HepG2 (cell line): ENCODE measurements at regions of chr9 and their contacts with region 1.

Region 1: DNA sequence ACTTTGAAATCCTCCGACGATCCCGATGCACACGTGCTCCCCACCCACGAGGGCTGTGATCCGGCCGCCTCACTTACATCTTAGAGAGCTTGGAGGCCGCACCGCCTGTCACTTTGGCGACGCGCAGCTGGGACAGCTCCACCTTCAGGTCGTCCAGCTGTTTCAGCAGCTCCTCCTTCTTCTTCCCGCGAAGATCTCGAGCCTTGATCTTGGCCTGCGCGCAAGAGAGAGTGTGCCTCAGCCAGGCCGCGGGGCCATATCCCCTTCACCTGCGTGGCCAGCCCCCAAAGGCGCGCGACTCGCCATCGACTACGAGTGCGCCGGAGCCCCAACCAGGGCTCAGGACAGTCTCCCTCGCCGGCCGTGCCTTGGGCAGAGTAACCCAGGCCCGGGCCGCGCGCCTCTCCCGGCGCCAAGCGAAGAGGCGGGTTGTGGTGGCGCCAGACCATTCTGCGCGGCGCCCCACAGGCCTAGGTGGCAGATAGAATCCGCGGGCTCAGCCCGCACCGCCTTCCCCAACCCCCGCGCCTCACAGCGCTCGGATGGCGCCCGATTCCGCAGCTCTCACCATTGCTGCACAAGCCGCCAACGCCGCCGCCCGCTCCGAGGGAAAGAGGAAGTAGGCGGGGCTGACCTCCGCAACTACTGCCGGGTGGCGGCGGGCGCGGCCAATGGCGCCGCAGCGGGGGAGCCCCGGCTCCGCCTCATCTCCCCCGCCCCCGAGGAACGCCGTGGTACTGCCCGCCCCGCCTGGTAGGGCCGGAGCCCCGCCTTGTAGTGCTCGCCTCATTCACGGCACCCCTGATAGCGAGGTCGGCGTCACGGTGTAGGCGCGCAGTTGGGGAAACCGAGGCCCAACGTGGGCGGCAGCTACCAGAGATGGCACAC is at the starts of genes ARPC5L and RPL35:
- DNase-seq: peak; percentile 78
- ATAC-seq: peak; percentile 90
- H3K4me3 ChIP-seq: peak within 1 kb of the TSS; percentile 89 to 97 (median 91)
- H3K27ac ChIP-seq: peak within 1 kb of the TSS; percentile 95
- H3K4me1 ChIP-seq: peaks cover 44% of the 10 kb centered on the region
- H3K27me3 ChIP-seq: no peaks in the 10 kb centered on the region; a peak in 1 of 5 replicates
- CTCF ChIP-seq: peak; percentile 40
- EP300 ChIP-seq: peak in 1 of 2 experiments; percentile 19; a peak in 1 of 4 replicates
- POLR2A ChIP-seq: peak in 1 of 2 experiments; percentile 85; a peak in 2 of 4 replicates
- RAD21 ChIP-seq: no peak
- total RNA-seq, gene ARPC5L: 33.8 and 35.4 TPM in 2 replicates
- total RNA-seq, gene RPL35: 2,153 and 2,627 TPM in 2 replicates

Region 2: GRCh38 chr9:124908570-124908969 is 47.0 kb after region 1 on chr9:
- CTCF ChIA-PET with region 1: no interaction called
- POLR2A ChIA-PET with region 1: no interaction called
- in situ Hi-C with region 1: no loop called
- intact Hi-C with region 1: no loop called
- DNase-seq: no peak
- ATAC-seq: no peak
- H3K4me3 ChIP-seq: no peak overlapping the region
- H3K27ac ChIP-seq: no peak overlapping the region
- H3K4me1 ChIP-seq: no peaks in the 10 kb centered on the region
- H3K27me3 ChIP-seq: no peaks in the 10 kb centered on the region
- CTCF ChIP-seq: no peak
- EP300 ChIP-seq: no peak
- POLR2A ChIP-seq: no peak
- RAD21 ChIP-seq: no peak

Region 3: DNA sequence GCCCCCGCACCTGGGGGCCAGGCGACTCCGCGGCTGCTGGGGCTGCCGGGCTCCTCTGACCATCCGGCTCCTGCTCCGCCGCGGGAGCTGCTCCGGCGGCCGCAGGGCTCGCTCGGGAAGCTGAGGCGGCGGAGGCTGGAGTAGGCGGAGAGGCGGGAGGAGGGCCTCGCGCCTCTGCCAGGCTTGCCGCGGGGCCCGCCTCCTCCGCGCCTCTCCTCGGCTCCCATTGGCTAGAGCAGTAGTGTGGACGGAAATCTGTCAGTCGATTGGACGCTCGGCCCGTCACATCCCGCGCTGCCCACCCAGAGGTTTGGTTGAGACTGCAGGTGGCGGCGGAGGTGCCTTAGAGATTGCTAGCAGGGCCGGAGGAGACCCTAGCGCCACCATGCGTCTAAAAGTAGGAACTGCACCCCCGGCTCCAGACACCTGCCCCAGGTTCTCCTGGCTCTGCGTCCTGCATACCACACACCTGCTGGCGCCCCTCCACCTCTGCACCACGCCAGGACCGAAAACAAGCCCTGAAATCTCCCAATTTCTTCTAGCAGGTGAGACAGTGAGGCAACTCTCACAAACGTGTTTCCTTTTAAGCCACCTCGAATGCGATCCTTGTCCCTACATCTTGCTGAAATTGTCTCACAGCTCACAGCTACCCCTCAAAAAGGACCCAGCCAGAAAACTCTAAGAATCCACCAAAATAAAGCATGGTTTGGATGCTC is 281.9 kb after region 1 on chr9 and contains the start of gene SCAI:
- CTCF ChIA-PET with region 1: no interaction called
- POLR2A ChIA-PET with region 1: no interaction called
- in situ Hi-C with region 1: no loop called
- intact Hi-C with region 1: loop called (anchors 10 kb)
- DNase-seq: peak; percentile 97
- ATAC-seq: peak; percentile 99
- H3K4me3 ChIP-seq: peak within 1 kb of the TSS; percentile 55 to 82 (median 71)
- H3K27ac ChIP-seq: peak within 1 kb of the TSS; percentile 56
- H3K4me1 ChIP-seq: peaks cover 20% of the 10 kb centered on the region
- H3K27me3 ChIP-seq: no peaks in the 10 kb centered on the region; a peak in 1 of 5 replicates
- CTCF ChIP-seq: peak; percentile 96
- EP300 ChIP-seq: 0 out of 4 replicates have a peak, but pooled peaks of 1 of the 2 experiments have one; percentile 13
- POLR2A ChIP-seq: peak in 1 of 2 experiments; percentile 66; a peak in 1 of 4 replicates
- RAD21 ChIP-seq: peak; percentile 97
- total RNA-seq, gene SCAI: 8.4 and 10.3 TPM in 2 replicates